ENCODE measurements at regions of chr1 and their contacts with region 1.

Region 1: DNA sequence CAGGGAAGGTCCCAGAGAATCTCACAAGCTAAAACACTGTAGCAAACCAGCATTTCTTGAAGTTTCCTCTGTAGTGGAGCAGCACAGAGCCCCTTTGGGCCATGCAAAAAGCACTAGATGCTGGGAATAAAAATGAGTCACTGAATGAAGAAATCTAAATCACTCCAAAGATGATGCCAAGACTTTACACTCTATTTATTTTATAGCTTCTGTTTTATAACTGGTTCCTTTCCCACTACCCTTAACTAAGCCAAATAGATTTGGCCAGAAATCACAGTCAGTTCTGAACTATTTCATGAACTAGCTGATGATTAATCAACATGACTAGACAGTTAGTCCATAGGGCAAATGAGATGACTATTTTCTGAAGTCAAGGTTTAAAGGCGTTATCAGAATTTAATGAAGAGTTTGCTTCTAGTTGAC is 89.5 kb downstream of the SCMH1 start:
- DNase-seq: peak in 1 of 2 donors; percentile 51
- ATAC-seq: peak; percentile 85
- H3K4me3 ChIP-seq: no peak overlapping the region
- H3K27ac ChIP-seq: peak overlapping the region in 1 of 2 donors; percentile 89
- H3K4me1 ChIP-seq: peaks cover 0 to 6% of the 10 kb centered on the region in 2 donors
- H3K27me3 ChIP-seq: no peaks in the 10 kb centered on the region

Region 2: GRCh38 chr1:41109316-41110197 is 43.1 kb before region 1 on chr1:
- intact Hi-C with region 1: loop called in 1 of 2 experiments (anchors 10 kb)
- DNase-seq: no peak
- ATAC-seq: peak; percentile 93
- H3K4me3 ChIP-seq: peak overlapping the region in 1 of 2 donors; percentile 76
- H3K27ac ChIP-seq: peak overlapping the region; percentile 99 to 100
- H3K4me1 ChIP-seq: peaks cover 4 to 11% of the 10 kb centered on the region in 2 donors
- H3K27me3 ChIP-seq: no peaks in the 10 kb centered on the region

Region 3: GRCh38 chr1:41241782-41242341 is 89.2 kb after region 1 on chr1 and contains the start of gene SCMH1:
- intact Hi-C with region 1: loop called in 1 of 2 experiments (anchors 10 kb)
- DNase-seq: peak; percentile 61 to 84
- ATAC-seq: peak; percentile 63
- H3K4me3 ChIP-seq: peak within 1 kb of the TSS; percentile 98 to 99
- H3K27ac ChIP-seq: peak within 1 kb of the TSS; percentile 99
- H3K4me1 ChIP-seq: peaks cover 0 to 7% of the 10 kb centered on the region in 2 donors
- H3K27me3 ChIP-seq: no peaks in the 10 kb centered on the region
- total RNA-seq, gene SCMH1: 50.3 to 60.7 TPM